Thyroid gland (tissue), 4 donors: ENCODE measurements at regions of chr6 and their contacts with region 1.

Region 1: DNA sequence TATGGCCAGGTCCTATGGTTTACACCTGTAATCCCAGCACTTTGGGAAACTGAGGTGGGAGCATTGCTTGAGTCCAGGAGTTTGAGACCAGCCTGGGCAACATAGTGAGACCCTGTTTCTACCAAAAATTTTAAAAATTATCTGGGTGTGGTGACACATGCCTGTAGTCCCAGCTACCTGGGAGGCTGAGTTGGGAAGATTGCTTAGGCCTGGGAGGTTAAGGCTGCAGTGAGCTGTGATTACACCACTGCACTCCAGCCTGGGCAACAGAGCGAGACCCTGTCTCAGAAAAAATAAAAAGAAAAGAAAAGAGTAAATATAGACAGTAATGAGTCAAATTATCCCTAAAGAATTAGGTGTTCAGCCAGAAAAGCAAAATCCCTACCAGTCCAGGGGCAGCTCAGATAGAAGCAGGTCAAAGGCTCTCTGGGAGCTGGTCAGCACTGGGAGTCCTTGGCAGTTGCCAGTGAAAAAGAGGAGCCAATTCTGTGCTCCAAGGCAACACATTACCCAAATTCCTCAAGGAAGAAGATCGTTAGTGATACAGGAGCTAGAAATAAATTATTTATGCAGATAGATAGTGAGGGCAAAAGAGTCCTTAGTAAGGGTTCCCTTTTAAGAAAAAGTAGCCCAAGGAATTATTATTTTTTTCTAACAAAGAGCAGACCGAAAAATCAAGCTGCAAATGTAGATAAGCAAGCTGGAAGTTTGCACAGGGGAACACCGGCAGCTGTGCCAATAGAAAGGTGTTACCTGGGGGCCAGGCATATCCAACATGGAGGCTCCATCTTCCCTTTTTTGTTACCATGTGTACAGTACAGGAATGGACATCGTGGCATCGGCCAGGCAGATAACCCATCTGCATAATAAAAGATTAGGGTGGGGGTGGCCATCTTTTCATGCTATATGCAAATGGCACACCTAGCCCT is 31.4 kb upstream of the SEC63 start:
- DNase-seq: no peak
- H3K4me3 ChIP-seq: no peak overlapping the region
- H3K27ac ChIP-seq: no peak overlapping the region
- H3K4me1 ChIP-seq: no peaks in the 10 kb centered on the region
- H3K27me3 ChIP-seq: no peaks in the 10 kb centered on the region
- CTCF ChIP-seq: no peak
- POLR2A ChIP-seq: no peak

Region 2: DNA sequence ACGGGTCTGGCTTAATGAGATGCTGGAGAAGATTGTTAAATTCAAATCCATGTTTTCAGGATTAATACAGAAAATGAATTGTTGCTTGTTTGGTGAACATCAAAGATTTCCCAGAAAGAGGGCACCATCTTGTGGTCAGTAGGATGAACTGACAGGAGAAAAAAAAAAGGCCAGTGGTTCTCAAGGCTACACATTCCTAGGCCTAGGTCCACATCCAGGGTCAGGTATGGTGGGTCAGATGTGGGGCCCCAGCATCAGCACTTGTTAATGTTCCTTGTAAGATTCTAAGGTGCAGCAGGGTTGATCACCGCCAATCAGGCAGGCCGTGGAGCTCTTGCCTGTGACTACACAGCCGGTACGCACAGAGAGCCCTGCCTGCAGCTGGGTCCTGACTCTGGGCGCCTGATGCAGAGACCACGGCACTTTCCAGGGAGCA is 537.3 kb after region 1 on chr6:
- intact Hi-C with region 1: loop called (anchors 10 kb)
- DNase-seq: no peak
- H3K4me3 ChIP-seq: no peak overlapping the region
- H3K27ac ChIP-seq: no peak overlapping the region
- H3K4me1 ChIP-seq: no peaks in the 10 kb centered on the region
- H3K27me3 ChIP-seq: no peaks in the 10 kb centered on the region
- CTCF ChIP-seq: peak; percentile 59 to 85 (median 84)
- POLR2A ChIP-seq: no peak